Heart left ventricle (tissue), 16 donors: ENCODE measurements at regions of chr2 and their contacts with region 1.

Region 1: GRCh38 chr2:197399887-197400540 is 34.8 kb downstream of the SF3B1 start:
- DNase-seq: no peak
- ATAC-seq: no peak
- H3K4me3 ChIP-seq: no peak overlapping the region
- H3K27ac ChIP-seq: no peak overlapping the region
- H3K4me1 ChIP-seq: no peaks in the 10 kb centered on the region
- H3K27me3 ChIP-seq: no peaks in the 10 kb centered on the region
- CTCF ChIP-seq: no peak
- POLR2A ChIP-seq: no peak

Region 2: DNA sequence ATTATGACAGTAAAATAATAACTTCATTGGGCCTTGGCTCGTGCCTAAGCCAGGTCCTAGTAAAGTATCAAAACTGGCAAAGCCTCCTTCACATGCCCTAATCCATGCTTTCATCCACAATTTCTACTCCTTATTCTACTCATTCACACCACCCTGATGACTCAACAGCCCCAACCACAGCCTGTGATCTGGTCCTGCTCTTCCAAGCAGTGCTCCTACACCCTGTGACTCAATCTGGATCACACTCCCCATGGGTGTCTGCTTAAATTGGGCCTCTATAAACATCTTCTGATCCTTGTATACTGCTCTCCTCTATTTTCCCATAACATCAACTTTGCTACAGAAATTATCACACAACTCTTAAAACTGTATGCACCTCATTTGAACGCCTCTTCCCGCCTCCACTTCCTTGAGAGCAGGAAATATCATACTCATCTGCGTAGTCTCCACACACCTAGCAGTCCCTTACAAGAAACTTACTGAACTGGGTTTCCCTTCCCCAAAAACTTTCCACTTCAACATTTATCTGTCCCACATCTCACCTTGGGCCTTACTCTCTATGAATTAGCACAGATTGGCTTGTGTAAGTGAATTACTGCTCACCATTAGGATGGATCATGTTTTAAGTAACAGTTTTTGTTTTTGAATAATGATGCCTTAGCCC is 616.5 kb before region 1 on chr2:
- intact Hi-C with region 1: loop called in 4 of 10 experiments (anchors 10 kb)
- DNase-seq: no peak
- ATAC-seq: peak in 1 of 4 donors; percentile 60
- H3K4me3 ChIP-seq: no peak overlapping the region
- H3K27ac ChIP-seq: no peak overlapping the region
- H3K4me1 ChIP-seq: no peaks in the 10 kb centered on the region
- H3K27me3 ChIP-seq: no peaks in the 10 kb centered on the region
- CTCF ChIP-seq: no peak
- POLR2A ChIP-seq: no peak

Region 3: GRCh38 chr2:197560146-197560665 is 160.2 kb after region 1 on chr2:
- intact Hi-C with region 1: no loop called
- DNase-seq: no peak
- ATAC-seq: no peak
- H3K4me3 ChIP-seq: no peak overlapping the region
- H3K27ac ChIP-seq: no peak overlapping the region
- H3K4me1 ChIP-seq: peaks cover 0 to 17% (median 6%) of the 10 kb centered on the region in 12 donors
- H3K27me3 ChIP-seq: no peaks in the 10 kb centered on the region
- CTCF ChIP-seq: no peak
- POLR2A ChIP-seq: no peak